Transverse colon (tissue), 4 donors: ENCODE measurements at regions of chr2 and their contacts with region 1.

Region 1: GRCh38 chr2:210072922-210073509 is 70.6 kb downstream of the RPE start:
- DNase-seq: no peak
- H3K4me3 ChIP-seq: no peak overlapping the region
- H3K27ac ChIP-seq: no peak overlapping the region
- H3K4me1 ChIP-seq: no peaks in the 10 kb centered on the region
- H3K27me3 ChIP-seq: no peaks in the 10 kb centered on the region
- CTCF ChIP-seq: peak; percentile 42 to 61 (median 57)
- EP300 ChIP-seq: no peak
- POLR2A ChIP-seq: no peak

Region 2: GRCh38 chr2:210195101-210195852 is 122.3 kb after region 1 on chr2:
- in situ Hi-C with region 1: loop called in 3 of 4 experiments (anchors 10 kb)
- intact Hi-C with region 1: no loop called
- DNase-seq: no peak
- H3K4me3 ChIP-seq: peak overlapping the region in 1 of 4 donors; percentile 14
- H3K27ac ChIP-seq: no peak overlapping the region
- H3K4me1 ChIP-seq: peaks cover 0 to 5% (median 0%) of the 10 kb centered on the region in 4 donors
- H3K27me3 ChIP-seq: peaks cover 4% of the 10 kb centered on the region
- CTCF ChIP-seq: peak; percentile 64 to 75 (median 64)
- EP300 ChIP-seq: no peak
- POLR2A ChIP-seq: no peak